ENCODE measurements at regions of chr1 and their contacts with region 1.

Region 1: DNA sequence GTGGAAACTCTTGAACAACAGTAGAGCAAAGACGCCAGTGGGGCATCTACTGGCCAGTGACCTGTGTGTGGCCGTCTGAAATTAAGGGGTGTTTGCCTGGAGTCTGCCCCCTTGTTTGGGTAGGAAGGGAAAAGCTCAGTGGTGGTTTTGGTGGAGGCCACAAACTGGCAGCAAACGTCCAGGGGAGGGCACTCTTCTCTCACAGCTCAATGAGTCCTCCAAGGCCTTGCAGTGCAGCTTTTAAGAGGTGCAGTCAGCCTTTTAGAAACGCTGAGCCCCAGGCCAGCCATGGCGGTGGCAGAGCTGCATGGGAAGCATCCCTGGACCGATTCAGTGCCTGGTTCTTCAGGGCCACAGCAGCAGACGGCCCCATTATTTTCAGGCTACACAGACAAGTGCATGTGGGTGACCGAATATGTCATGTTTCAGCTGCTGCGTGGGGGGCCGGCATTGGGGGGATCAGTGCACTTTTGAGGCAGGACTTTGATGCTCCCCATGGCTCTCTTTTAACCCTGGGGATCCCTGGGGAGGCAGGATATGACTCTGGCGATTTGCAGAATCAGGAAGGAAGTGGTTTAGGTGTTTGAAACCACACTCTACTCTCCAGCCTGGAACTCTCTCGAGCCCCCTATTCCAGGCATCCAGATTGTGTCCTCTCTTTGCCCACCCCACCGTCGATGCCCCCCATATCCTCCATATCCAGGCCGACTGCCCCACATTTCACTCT is 414.0 kb downstream of the PRDM2 start:
- DNase-seq: peak; percentile 69 to 93 (median 84)

Region 2: DNA sequence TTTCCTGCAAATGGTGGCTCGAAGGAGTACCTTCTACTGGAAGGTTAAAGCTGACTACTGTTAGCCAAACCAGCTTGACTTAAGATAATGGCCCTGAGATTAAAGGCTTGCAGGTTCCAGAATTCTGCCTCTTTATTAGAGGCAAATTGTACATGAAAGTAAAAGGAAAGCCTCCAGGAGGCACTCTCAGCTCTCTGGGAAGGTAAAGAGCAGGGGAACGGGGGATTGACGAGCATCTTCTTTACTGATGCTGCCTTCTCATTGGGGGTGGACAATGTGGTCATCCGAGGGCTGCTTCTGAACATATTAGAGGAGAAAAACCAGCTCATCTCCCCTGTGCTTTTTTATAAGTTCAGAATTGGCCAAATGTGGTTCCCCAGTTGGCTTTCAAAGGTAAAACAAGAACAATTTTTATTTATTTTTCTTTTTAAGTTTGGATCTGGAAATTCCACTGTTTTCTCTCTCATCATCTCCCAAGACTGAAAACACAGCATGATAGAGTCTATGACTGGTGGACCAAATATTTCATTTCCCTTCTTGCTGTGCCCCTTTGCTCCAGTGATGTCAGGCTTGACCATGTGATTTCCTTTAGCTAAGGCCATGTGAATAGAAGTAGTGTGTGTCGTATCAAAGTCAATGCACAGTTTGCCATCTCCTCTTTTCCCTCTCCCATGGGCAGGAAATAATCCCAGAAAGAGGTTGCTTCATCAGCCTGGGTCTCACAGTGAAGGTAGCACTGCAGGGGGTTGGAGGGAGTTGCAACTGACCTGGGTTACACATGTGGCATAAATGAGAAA is 121.3 kb before region 1 on chr1:
- intact Hi-C with region 1: no loop called
- DNase-seq: no peak

Region 3: DNA sequence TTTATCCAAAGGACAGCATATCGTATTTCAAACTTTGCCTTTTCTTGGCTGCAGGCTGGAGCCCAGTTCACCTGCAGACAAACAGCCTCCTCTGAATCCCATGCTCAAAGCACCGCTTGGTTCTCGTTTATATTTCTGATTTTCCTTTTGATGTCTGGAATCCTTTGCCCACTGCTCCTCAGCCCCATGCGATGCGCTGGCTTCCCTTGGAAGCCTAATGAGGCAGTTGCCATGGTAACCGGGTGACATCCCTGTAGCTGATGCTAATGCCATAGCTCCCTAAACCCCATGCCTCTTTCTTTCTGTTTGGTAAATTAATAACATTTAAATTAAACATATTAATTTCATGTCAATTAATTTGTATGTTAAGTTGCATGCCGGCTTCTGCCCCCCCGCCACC is 86.9 kb before region 1 on chr1:
- intact Hi-C with region 1: no loop called
- DNase-seq: peak; percentile 18 to 89 (median 56)

Region 4: GRCh38 chr1:14259191-14259757 is 145.3 kb after region 1 on chr1:
- intact Hi-C with region 1: loop called (anchors 10 kb)
- DNase-seq: peak; percentile 83 to 98 (median 92)

Region 5: DNA sequence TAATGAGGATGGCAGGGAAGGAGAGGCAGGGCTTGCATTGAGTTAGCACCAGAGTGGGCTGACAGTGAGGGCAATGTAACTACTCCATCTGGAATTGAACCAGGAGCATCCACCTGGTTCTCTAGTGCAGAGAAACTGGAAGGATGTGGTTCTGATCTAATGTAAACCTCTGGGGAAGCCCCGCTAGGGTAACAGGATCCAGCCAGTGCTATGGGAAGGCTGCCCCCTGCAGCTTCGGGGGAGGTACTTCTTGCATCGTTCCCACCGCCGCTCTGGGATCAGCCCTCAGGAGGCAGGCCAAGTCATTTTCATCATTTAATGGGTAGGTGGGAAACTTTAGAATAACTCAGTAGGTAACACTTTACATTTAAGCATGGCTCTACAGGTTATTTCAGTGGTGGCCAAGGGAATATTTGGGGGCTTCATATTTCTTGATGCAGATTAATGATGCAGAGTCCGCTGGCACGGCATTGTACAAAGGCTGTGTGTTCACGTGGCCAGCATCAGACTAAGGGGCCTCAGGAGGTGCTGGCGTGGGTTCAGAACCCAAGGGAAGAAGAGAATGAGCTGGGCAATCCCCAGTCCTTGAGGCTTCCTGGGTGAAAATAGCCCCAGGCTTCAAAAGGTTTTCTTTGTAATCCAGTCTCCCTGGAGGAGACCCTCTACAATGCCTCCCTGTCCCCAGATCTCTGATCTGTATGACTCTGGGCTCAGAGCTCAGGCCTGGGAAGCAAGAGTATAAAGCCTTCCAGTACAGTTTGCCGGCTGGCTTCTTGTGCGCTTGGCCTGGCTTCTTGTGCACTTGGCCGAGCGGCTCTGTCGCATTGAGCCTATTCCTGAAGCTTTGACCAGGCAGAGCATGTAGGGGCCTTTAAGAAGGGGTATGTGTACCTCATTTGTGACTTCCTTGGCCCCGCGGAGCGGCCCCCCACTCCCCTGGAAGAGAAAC is 458.1 kb after region 1 on chr1:
- intact Hi-C with region 1: loop called (anchors 10 kb)
- DNase-seq: peak in 35 of 42 donors; percentile 11 to 78 (median 47)

Region 6: DNA sequence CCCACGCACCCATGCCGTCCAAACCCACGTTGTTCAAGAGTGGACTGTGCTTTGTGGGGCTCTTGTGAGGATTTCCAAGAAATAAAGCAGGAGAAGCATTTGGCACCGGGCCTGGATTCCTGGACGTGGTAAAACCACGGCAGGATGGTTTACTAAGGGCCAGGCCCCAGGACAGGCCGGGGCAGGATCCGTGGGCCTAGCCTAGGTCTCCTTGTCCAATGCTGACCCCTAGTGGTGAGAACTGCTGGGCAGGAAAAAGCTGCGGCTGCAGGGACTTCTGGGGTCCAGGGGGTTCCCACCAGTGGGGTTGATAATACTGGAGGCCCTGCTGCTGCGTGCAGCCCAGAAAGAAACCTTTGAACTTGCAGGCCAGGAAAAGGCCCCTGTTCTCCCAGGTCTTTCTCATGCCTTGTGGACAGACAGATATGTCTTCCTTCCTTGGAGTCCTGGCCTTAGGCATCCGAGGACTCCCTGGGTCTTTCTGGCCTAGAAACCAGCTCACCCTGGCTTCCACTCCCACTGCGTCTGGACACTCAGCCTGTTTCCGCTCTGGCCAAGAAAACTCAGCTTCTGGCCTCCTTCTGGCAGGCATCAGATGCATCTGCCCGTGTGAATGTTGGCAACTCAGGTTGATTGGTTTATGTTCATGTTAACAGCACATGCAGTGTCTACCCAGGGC is 932.6 kb after region 1 on chr1:
- intact Hi-C with region 1: loop called (anchors 10 kb)
- DNase-seq: peak; percentile 52 to 96 (median 83)